ENCODE measurements at regions of chr15 and their contacts with region 1.

Region 1: GRCh38 chr15:86347245-86347644 is 267.6 kb downstream of the AGBL1 start:
- DNase-seq: no peak
- ATAC-seq: no peak
- H3K4me3 ChIP-seq: no peak overlapping the region
- H3K27ac ChIP-seq: no peak overlapping the region
- H3K4me1 ChIP-seq: no peaks in the 10 kb centered on the region
- H3K27me3 ChIP-seq: no peaks in the 10 kb centered on the region
- CTCF ChIP-seq: no peak

Region 2: GRCh38 chr15:86961680-86962079 is 614.4 kb after region 1 on chr15:
- intact Hi-C with region 1: loop called in 1 of 2 experiments (anchors 5 kb)
- DNase-seq: no peak
- ATAC-seq: no peak
- H3K4me3 ChIP-seq: no peak overlapping the region
- H3K27ac ChIP-seq: no peak overlapping the region
- H3K4me1 ChIP-seq: no peaks in the 10 kb centered on the region
- H3K27me3 ChIP-seq: no peaks in the 10 kb centered on the region
- CTCF ChIP-seq: no peak